CD4-positive, alpha-beta memory T cell (primary cell): ENCODE measurements at regions of chr19 and their contacts with region 1.

Region 1: GRCh38 chr19:51593969-51594773 is 23.1 kb downstream of the ZNF175 start:
- DNase-seq: peak; percentile 92 to 94 (median 93)
- H3K4me3 ChIP-seq: peak overlapping the region; percentile 91 to 93
- H3K4me3 Mint-ChIP-seq: peak overlapping the region; percentile 85 to 100 (median 96)
- H3K27ac ChIP-seq: peak overlapping the region; percentile 58
- H3K27ac Mint-ChIP-seq: peak overlapping the region; percentile 33 to 97 (median 93)
- H3K4me1 ChIP-seq: peaks cover 16% of the 10 kb centered on the region
- H3K4me1 Mint-ChIP-seq: peaks cover 16 to 25% (median 22%) of the 10 kb centered on the region in 4 donors
- H3K27me3 ChIP-seq: no peaks in the 10 kb centered on the region
- H3K27me3 Mint-ChIP-seq: peaks cover 2 to 11% of the 10 kb centered on the region in 2 donors

Region 2: GRCh38 chr19:51570962-51571575 is 23.1 kb before region 1 on chr19 and contains the start of gene ZNF175:
- CTCF ChIA-PET with region 1: no interaction called
- POLR2A ChIA-PET with region 1: interaction called, 7 read pairs
- intact Hi-C with region 1: loop called (anchors 1 kb)
- DNase-seq: peak; percentile 71 to 79 (median 74)
- H3K4me3 ChIP-seq: peak within 1 kb of the TSS; percentile 39 to 68
- H3K4me3 Mint-ChIP-seq: peak within 1 kb of the TSS; percentile 94 to 100 (median 96)
- H3K27ac ChIP-seq: no peak within 1 kb of the TSS
- H3K27ac Mint-ChIP-seq: peak within 1 kb of the TSS; percentile 63 to 94 (median 85)
- H3K4me1 ChIP-seq: peaks cover 19% of the 10 kb centered on the region
- H3K4me1 Mint-ChIP-seq: peaks cover 19 to 36% (median 25%) of the 10 kb centered on the region in 4 donors
- H3K27me3 ChIP-seq: no peaks in the 10 kb centered on the region
- H3K27me3 Mint-ChIP-seq: peaks cover 3 to 6% of the 10 kb centered on the region in 2 donors
- total RNA-seq, gene ZNF175: 17.1 to 17.4 TPM

Region 3: DNA sequence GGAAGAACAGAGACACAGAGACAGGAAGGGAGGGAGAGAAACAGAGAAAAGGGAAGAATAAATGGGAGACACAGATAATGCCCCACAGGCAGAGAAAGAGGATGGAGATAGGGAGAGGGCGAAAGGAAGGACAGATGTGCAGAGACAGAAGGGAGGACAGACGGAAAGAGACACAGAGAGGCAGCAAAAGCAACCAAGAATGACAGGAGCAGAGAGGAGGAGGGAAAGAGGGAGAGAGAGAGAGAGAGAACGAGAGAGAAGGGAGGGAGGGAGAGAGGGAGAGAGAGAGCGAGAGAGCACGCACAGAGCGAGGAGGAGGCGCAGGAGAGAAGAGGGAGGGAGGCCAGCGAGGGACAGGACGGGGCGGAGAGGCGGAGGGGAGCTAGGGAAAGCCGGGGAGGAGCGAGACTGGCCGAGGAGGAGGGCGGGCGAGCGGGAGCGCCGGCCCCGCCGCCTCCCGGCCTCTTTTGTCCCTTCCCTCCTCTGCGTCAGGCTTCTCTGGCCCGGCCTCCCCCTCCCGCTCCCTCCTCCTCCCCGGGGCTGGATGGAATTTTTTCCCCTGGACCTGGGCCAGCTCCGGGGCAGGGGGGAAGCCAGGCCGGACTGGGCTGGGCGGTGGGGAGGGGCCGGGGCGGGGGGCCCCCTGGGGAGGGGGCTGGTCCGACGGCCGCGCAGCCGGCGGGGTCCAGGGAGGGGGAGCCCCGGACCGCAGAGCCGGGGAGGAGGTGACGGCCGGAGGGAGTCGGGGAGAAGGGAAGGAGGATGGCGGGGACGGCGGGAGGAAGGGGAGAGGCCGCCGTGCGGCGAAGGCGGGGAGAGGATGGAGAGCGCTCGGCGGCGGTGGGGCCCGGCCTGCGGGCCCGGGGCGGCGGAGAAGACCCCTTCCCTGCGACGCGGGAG is 94.8 kb after region 1 on chr19:
- CTCF ChIA-PET with region 1: no interaction called
- POLR2A ChIA-PET with region 1: no interaction called
- intact Hi-C with region 1: no loop called
- DNase-seq: peak in 1 of 5 donors; percentile 51
- H3K4me3 ChIP-seq: no peak overlapping the region
- H3K4me3 Mint-ChIP-seq: peak overlapping the region; percentile 82 to 93 (median 90)
- H3K27ac ChIP-seq: no peak overlapping the region
- H3K27ac Mint-ChIP-seq: peak overlapping the region; percentile 68 to 93 (median 87)
- H3K4me1 ChIP-seq: peaks cover 6% of the 10 kb centered on the region
- H3K4me1 Mint-ChIP-seq: peaks cover 10 to 31% (median 18%) of the 10 kb centered on the region in 4 donors
- H3K27me3 ChIP-seq: no peaks in the 10 kb centered on the region
- H3K27me3 Mint-ChIP-seq: peaks cover 2 to 3% of the 10 kb centered on the region in 2 donors